ENCODE measurements at regions of chr3 and their contacts with region 1.

Region 1: DNA sequence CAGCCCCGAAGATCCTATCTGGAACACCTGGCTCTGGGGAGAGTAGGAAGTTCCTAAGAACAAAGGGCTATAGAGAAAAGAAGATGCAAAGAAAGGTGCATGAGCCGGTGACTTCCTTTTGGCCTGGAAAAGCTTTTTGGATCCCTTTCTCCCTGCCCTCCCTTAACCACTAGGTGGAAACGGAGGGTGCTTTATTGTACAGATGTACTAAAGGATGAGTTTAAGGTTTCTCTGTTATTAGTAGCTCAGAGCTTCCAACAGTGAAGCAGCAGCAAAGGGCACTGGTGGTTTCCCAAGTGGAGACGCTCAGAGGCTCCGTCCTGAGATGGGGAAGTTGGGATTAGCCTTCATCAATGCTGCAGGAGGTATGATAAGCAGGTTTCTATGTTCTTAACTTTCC is 5.9 kb upstream of the ADGRG7 start:
- DNase-seq: no peak
- ATAC-seq: peak; percentile 58
- H3K4me3 ChIP-seq: peak overlapping the region; percentile 55
- H3K27ac ChIP-seq: peak overlapping the region; percentile 54
- H3K4me1 ChIP-seq: peaks cover 15% of the 10 kb centered on the region
- H3K27me3 ChIP-seq: no peaks in the 10 kb centered on the region
- CTCF ChIP-seq: peak; percentile 24 to 47 (median 34); a peak in 4 of 6 replicates
- EP300 ChIP-seq: 0 out of 4 replicates have a peak, but pooled peaks of 1 of the 2 experiments have one; percentile 9
- POLR2A ChIP-seq: no peak
- RAD21 ChIP-seq: peak; percentile 54

Region 2: DNA sequence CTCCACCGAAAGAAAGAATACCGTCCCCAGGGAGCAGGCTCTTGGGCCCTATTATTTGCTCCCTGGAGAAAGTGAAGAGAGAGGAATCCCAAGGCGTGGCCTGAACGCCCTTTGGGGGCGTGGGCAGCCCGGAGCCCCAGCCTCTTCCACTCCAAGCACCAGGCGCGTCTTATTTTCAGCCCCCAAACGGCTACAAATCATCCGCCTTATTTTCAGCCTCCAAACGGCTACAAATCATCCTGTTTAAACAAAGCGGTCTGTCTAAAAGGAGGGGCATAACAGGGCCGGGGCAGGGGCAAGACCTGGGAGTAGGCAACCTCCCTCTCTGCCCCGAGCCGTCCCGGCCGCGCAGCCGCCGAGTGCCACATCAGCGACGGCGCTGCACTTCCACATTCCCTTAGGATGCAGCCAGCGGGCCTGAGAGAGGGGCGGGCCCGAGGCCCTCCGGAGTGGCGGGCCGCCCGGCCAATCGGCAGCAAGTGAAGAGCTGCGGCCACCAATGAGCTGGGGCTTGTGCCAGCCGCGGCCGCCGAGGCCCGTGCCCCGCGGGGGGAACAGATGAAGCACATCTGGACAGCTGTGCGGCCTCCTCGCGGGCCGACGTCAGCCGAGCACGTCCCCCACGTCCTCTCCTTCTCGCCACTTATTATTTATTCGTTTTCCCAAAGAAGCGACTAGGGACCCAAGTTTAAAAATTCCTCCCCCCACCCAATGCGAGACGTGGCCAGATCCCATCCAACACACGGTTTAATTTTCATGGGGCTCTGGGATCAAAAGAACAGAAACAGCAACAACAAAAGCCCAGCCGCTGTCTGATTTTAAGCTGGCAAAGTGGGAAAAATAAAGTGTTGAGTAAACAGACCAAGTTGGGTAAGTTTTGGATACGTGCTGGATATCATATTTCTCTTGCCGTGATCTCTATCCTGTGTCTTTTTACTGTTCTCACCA is 111.1 kb before region 1 on chr3 and contains the start of gene TMEM45A:
- CTCF ChIA-PET with region 1: no interaction called
- POLR2A ChIA-PET with region 1: interaction called, 10 read pairs
- RAD21 ChIA-PET with region 1: interaction called, 3 read pairs
- SMC1A ChIA-PET with region 1: interaction called, 4 read pairs
- in situ Hi-C with region 1: no loop called
- intact Hi-C with region 1: no loop called
- DNase-seq: peak; percentile 72
- ATAC-seq: peak; percentile 99
- H3K4me3 ChIP-seq: peak within 1 kb of the TSS; percentile 85
- H3K27ac ChIP-seq: peak within 1 kb of the TSS; percentile 62
- H3K4me1 ChIP-seq: peaks cover 21% of the 10 kb centered on the region
- H3K27me3 ChIP-seq: no peaks in the 10 kb centered on the region
- CTCF ChIP-seq: no peak
- EP300 ChIP-seq: no peak
- POLR2A ChIP-seq: peak; percentile 63
- RAD21 ChIP-seq: no peak
- polyA plus RNA-seq, gene TMEM45A: 2.5 to 3.0 TPM

Region 3: DNA sequence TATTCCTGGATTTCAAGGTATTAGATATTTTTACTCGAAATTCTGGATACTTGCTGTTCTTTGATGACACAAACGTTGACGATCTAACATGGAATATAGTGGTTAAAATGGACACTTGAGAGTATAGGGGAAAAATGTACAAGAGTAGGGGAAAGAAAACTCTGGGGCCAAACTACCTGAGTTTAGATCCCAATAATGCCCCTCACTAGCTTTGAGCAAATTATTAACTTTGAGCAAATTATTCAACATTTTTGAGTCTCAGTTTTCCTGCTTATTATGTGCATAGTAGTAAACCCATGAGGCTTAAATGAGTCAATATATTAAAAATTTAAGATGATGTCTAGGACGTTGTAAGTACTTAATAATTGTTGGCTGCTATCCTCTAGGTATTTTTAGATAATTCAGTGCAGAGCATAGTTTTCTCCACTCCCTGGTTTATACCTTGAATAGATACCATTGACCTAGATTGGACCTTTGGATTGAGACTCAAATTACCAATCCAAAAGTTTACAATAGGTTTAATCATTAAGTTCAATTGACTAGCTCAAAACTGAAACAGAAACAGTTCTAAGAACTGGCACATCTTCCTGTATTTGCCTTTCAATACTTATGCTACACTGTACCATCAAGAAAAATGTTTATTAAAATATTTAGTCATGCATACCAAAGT is 10.4 kb after region 1 on chr3:
- CTCF ChIA-PET with region 1: interaction called, 9 read pairs
- POLR2A ChIA-PET with region 1: interaction called, 3 read pairs
- RAD21 ChIA-PET with region 1: interaction called, 9 read pairs
- SMC1A ChIA-PET with region 1: interaction called, 10 read pairs
- in situ Hi-C with region 1: no loop called
- intact Hi-C with region 1: no loop called
- DNase-seq: no peak
- ATAC-seq: peak; percentile 87
- H3K4me3 ChIP-seq: no peak overlapping the region
- H3K27ac ChIP-seq: no peak overlapping the region
- H3K4me1 ChIP-seq: no peaks in the 10 kb centered on the region
- H3K27me3 ChIP-seq: no peaks in the 10 kb centered on the region
- CTCF ChIP-seq: no peak
- EP300 ChIP-seq: no peak
- POLR2A ChIP-seq: no peak
- RAD21 ChIP-seq: no peak

Region 4: GRCh38 chr3:100634493-100635272 is 31.2 kb after region 1 on chr3:
- CTCF ChIA-PET with region 1: interaction called, 40 read pairs
- POLR2A ChIA-PET with region 1: interaction called, 11 read pairs
- RAD21 ChIA-PET with region 1: interaction called, 25 read pairs
- SMC1A ChIA-PET with region 1: interaction called, 41 read pairs
- in situ Hi-C with region 1: no loop called
- intact Hi-C with region 1: no loop called
- DNase-seq: peak; percentile 31
- ATAC-seq: peak; percentile 92
- H3K4me3 ChIP-seq: no peak overlapping the region
- H3K27ac ChIP-seq: no peak overlapping the region
- H3K4me1 ChIP-seq: no peaks in the 10 kb centered on the region
- H3K27me3 ChIP-seq: no peaks in the 10 kb centered on the region
- CTCF ChIP-seq: peak; percentile 12 to 56 (median 17); a peak in 2 of 6 replicates
- EP300 ChIP-seq: no peak
- POLR2A ChIP-seq: no peak
- RAD21 ChIP-seq: peak; percentile 31; the same call in 1 of the 2 replicates

Region 5: GRCh38 chr3:100641471-100642032 is 38.1 kb after region 1 on chr3:
- CTCF ChIA-PET with region 1: interaction called, 40 read pairs
- POLR2A ChIA-PET with region 1: interaction called, 3 read pairs
- RAD21 ChIA-PET with region 1: interaction called, 25 read pairs
- SMC1A ChIA-PET with region 1: interaction called, 41 read pairs
- in situ Hi-C with region 1: no loop called
- intact Hi-C with region 1: loop called (anchors 2 kb)
- DNase-seq: peak; percentile 24
- ATAC-seq: peak; percentile 91
- H3K4me3 ChIP-seq: no peak overlapping the region
- H3K27ac ChIP-seq: no peak overlapping the region
- H3K4me1 ChIP-seq: no peaks in the 10 kb centered on the region
- H3K27me3 ChIP-seq: no peaks in the 10 kb centered on the region
- CTCF ChIP-seq: no peak
- EP300 ChIP-seq: peak; percentile 59 to 64; a peak in 2 of 4 replicates
- POLR2A ChIP-seq: no peak
- RAD21 ChIP-seq: no peak

Region 6: GRCh38 chr3:100708967-100709841 is 105.7 kb after region 1 on chr3 and contains the start of gene TFG:
- CTCF ChIA-PET with region 1: interaction called, 12 read pairs
- POLR2A ChIA-PET with region 1: no interaction called
- RAD21 ChIA-PET with region 1: interaction called, 10 read pairs
- SMC1A ChIA-PET with region 1: interaction called, 21 read pairs
- in situ Hi-C with region 1: no loop called
- intact Hi-C with region 1: no loop called
- DNase-seq: peak; percentile 98
- ATAC-seq: peak; percentile 92
- H3K4me3 ChIP-seq: peak within 1 kb of the TSS; percentile 78
- H3K27ac ChIP-seq: peak within 1 kb of the TSS; percentile 91
- H3K4me1 ChIP-seq: peaks cover 9% of the 10 kb centered on the region
- H3K27me3 ChIP-seq: no peaks in the 10 kb centered on the region
- CTCF ChIP-seq: no peak
- EP300 ChIP-seq: no peak
- POLR2A ChIP-seq: peak; percentile 89
- RAD21 ChIP-seq: no peak
- polyA plus RNA-seq, gene TFG: 29.3 to 47.6 TPM

Region 7: DNA sequence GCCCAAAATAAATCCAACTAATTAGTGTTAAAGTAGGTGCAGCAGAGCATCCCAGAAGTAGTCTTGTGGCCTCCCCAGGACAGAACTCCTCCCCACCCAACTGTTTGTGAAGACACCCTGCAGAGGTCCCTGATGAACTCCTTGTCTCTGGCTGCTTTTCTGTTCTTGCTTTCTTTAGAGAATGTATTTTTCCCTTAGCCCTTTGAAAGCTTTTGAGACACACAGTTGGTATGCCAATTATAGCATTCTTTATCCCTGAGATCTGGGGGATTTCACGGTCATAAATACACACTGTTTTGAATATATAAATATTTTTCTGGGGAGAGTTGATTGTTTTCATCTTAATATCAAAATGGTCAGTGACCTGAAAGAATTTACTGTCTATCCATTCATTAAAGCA is 115.7 kb after region 1 on chr3:
- CTCF ChIA-PET with region 1: interaction called, 5 read pairs
- POLR2A ChIA-PET with region 1: no interaction called
- RAD21 ChIA-PET with region 1: no interaction called
- SMC1A ChIA-PET with region 1: interaction called, 3 read pairs
- in situ Hi-C with region 1: no loop called
- intact Hi-C with region 1: loop called (anchors 2 kb)
- DNase-seq: no peak
- ATAC-seq: 0 out of 3 replicates have a peak, but pooled peaks have one; percentile 5
- H3K4me3 ChIP-seq: no peak overlapping the region
- H3K27ac ChIP-seq: no peak overlapping the region
- H3K4me1 ChIP-seq: no peaks in the 10 kb centered on the region
- H3K27me3 ChIP-seq: no peaks in the 10 kb centered on the region
- CTCF ChIP-seq: no peak
- EP300 ChIP-seq: no peak
- POLR2A ChIP-seq: no peak
- RAD21 ChIP-seq: no peak